ENCODE measurements at regions of chr5 and their contacts with region 1.

Region 1: DNA sequence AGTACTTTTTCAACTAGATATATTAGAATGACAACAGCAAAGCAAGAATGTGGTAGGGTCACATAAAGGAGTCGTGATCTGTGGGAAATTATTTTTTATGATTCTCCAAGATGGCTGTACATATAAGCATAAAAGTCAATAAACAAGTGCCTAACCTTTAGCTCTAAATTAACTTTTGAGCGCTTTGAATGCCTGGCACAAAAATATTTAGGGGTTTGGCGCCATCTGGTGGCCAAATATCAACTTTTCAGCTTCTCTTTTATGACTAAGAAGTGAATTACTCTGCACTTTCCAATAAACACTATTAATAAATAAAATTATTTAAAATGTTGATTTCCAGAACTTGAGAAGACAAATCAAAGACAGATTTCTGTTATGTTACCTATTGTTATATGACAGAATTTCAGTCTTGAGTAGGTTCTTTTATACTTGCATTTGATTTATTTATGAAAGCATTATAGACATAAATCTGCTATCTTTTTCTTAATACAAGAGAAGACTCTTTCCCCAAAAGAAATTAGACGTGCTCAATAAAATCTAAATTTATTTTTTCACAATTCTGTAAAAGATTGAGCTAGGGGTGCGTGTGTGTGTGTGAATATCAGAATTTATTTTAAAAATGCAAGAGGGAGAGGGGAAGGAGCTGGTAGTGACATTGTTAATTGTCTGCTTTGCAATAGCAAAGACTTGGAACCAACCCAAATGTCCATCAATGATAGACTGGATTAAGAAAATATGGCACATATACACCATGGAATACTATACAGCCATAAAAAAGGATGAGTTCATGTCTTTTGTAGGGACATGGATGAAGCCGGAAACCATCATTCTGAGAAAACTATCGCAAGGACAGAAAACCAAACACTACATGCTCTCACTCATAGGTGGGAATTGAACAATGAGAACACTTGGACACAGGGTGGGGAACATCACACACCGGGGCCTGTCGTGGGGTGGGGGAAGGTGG is 36.7 kb upstream of the ARRDC3 start:
- DNase-seq: peak; percentile 55 to 76
- ATAC-seq: no peak
- H3K4me3 ChIP-seq: no peak overlapping the region
- H3K27ac ChIP-seq: no peak overlapping the region
- H3K4me1 ChIP-seq: no peaks in the 10 kb centered on the region
- H3K27me3 ChIP-seq: no peaks in the 10 kb centered on the region

Region 2: GRCh38 chr5:90866333-90866732 is 553.5 kb before region 1 on chr5:
- intact Hi-C with region 1: loop called (anchors 2 to 5 kb)
- DNase-seq: no peak
- ATAC-seq: peak; percentile 69
- H3K4me3 ChIP-seq: peak overlapping the region in 1 of 2 donors; percentile 26
- H3K27ac ChIP-seq: no peak overlapping the region
- H3K4me1 ChIP-seq: no peaks in the 10 kb centered on the region
- H3K27me3 ChIP-seq: no peaks in the 10 kb centered on the region

Region 3: DNA sequence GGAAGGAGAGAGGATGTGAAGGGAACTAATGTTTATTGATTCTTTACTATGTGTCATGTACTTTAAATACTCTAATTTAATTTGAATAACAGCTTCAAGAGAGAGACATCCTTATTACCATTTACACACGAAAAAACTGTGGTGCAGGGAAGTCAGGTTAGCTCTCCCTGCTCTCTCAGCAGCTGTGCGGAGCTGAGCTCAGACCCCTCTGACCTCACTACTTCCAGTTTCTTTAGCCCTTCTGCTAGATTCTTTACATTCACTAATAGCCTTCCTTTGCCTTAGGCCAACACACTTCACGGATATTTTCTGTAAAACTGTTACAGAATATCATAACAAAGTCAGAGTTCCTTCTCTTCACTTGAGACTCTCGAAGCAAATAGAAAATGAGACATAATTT is 94.5 kb after region 1 on chr5:
- intact Hi-C with region 1: no loop called
- DNase-seq: no peak
- ATAC-seq: no peak
- H3K4me3 ChIP-seq: no peak overlapping the region
- H3K27ac ChIP-seq: no peak overlapping the region
- H3K4me1 ChIP-seq: no peaks in the 10 kb centered on the region
- H3K27me3 ChIP-seq: no peaks in the 10 kb centered on the region

Measured in aorta (tissue), 5 donors.